GM18951 (cell line): ENCODE measurements at regions of chr6 and their contacts with region 1.

Region 1: GRCh38 chr6:73732845-73733675 is 37.1 kb downstream of the CD109 start:
- POLR2A ChIP-seq: no peak

Region 2: DNA sequence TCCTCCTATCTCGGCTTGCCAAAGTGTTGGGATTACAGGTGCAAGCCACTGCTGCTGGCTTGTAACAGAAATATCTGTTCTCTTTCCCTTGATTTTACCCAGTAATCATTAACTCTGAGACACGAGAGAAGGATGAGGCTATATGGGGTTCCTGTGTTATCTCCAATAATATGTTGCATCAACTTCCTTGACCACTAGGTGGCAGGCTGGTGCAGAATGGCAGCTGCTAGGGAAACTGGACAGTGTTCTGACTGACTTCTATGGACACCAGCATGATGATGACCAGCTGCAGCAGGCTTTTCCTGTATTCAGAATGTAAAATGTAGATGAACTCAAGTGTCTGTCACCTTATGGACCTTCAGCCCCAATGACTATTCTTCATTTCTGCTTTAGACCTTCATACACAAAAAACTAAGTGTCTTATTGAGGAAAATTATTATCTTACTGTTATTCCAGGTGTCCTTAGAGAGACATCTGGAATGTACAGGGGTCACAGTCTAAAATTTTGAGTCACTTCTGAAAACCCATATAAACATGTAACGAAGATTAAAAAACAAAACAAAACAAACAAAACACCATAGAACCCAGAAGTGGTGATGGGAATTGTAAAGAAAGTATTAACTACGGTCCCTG is 57.5 kb before region 1 on chr6:
- in situ Hi-C with region 1: loop called (anchors 5 kb)
- POLR2A ChIP-seq: no peak

Region 3: DNA sequence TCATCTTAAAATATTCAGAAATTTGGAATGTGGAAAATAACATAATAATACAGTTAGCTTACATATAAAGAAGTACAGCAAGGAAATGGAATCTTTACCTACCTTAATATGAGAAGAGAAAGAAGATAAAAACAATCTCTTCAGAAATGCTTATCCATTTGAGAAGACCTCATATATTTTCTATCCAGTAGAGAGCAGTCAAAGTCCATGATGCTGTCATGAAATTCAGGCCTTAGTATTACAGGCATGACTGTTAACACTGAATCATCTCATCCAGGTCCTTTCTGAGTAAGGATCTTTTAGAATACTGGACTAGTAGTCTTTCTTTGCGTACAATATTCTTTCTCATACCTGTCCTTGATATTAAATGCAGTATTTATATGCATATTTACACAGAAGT is 676.4 kb after region 1 on chr6:
- in situ Hi-C with region 1: loop called (anchors 25 kb)
- POLR2A ChIP-seq: no peak